Natural killer cell (primary cell): ENCODE measurements at regions of chr10 and their contacts with region 1.

Region 1: GRCh38 chr10:26486991-26487850 is 49.1 kb downstream of the APBB1IP start:
- DNase-seq: peak; percentile 61 to 87
- ATAC-seq: peak; percentile 72 to 87 (median 86)
- H3K4me3 ChIP-seq: no peak overlapping the region
- H3K4me3 Mint-ChIP-seq: peak overlapping the region; percentile 78
- H3K27ac ChIP-seq: peak overlapping the region; percentile 90
- H3K27ac Mint-ChIP-seq: peak overlapping the region; percentile 96 to 98
- H3K4me1 ChIP-seq: peaks cover 45% of the 10 kb centered on the region
- H3K4me1 Mint-ChIP-seq: peaks cover 64 to 66% of the 10 kb centered on the region in 2 donors
- H3K27me3 ChIP-seq: no peaks in the 10 kb centered on the region
- H3K27me3 Mint-ChIP-seq: no peaks in the 10 kb centered on the region
- CTCF ChIP-seq: no peak

Region 2: GRCh38 chr10:26437637-26438461 is 49.4 kb before region 1 on chr10 and contains the start of gene APBB1IP:
- intact Hi-C with region 1: loop called (anchors 2 kb)
- DNase-seq: peak; percentile 58 to 76
- ATAC-seq: peak; percentile 49 to 82 (median 58)
- H3K4me3 ChIP-seq: peak within 1 kb of the TSS; percentile 70
- H3K4me3 Mint-ChIP-seq: peak within 1 kb of the TSS; percentile 97
- H3K27ac ChIP-seq: peak within 1 kb of the TSS; percentile 89
- H3K27ac Mint-ChIP-seq: peak within 1 kb of the TSS; percentile 85 to 97
- H3K4me1 ChIP-seq: peaks cover 24% of the 10 kb centered on the region
- H3K4me1 Mint-ChIP-seq: peaks cover 50 to 56% of the 10 kb centered on the region in 2 donors
- H3K27me3 ChIP-seq: no peaks in the 10 kb centered on the region
- H3K27me3 Mint-ChIP-seq: no peaks in the 10 kb centered on the region
- CTCF ChIP-seq: no peak
- total RNA-seq, gene APBB1IP: 92.5 to 119 (median 100) TPM

Region 3: GRCh38 chr10:26474026-26474425 is 13.2 kb before region 1 on chr10:
- intact Hi-C with region 1: loop called (anchors 2 kb)
- DNase-seq: peak in 1 of 2 donors; percentile 41
- ATAC-seq: peak in 2 of 3 donors; percentile 28 to 46
- H3K4me3 ChIP-seq: no peak overlapping the region
- H3K4me3 Mint-ChIP-seq: peak overlapping the region; percentile 70
- H3K27ac ChIP-seq: peak overlapping the region; percentile 75
- H3K27ac Mint-ChIP-seq: peak overlapping the region; percentile 84 to 85
- H3K4me1 ChIP-seq: peaks cover 76% of the 10 kb centered on the region
- H3K4me1 Mint-ChIP-seq: peaks cover 75 to 83% of the 10 kb centered on the region in 2 donors
- H3K27me3 ChIP-seq: no peaks in the 10 kb centered on the region
- H3K27me3 Mint-ChIP-seq: no peaks in the 10 kb centered on the region
- CTCF ChIP-seq: no peak